Astrocyte of the cerebellum (primary cell): ENCODE measurements at regions of chr17 and their contacts with region 1.

Region 1: DNA sequence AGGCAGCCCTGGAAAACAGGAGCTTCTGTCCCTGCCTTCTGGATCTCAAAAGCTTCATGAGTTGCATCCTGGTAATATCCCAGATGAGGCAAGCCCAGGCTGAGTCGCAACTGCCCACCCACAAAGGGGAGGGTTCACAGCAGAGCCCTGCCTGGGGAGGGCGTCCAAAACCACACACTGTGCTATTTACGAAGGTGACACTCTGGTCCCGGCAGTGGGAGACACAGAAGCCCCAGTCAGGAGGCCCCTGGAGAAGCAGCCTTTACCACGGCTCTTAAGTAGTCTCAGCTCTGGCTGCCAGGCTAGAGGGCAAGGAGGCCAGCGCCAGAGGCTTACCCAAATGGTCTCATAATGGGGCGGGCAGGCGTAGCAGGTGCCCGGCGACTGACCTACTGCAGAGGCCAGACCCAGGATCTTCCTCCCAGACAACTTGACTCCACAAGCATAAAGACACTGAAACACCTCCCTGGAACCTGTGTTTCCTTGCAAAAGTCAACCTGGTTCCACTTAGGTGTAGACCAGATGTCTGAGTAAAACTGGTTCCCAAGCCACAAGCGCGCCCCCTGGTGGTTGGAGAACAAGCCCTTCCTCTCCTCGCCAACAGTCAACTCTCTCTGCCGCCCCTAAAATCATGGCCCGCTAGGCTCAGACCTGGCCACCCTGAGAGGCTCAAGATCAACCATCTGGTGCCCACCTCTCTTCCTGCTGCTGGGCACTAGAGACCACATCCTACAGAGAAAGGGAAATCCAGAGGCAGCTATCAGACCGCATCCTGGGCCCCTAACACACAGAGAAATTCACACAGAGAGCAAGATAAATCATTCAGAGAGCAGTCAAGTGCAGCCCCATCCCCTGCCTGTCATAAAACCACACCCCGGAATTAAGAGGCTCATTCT is 5.2 kb downstream of the AXIN2 start:
- DNase-seq: peak; percentile 73
- H3K4me3 ChIP-seq: no peak overlapping the region
- CTCF ChIP-seq: peak; percentile 89

Region 2: DNA sequence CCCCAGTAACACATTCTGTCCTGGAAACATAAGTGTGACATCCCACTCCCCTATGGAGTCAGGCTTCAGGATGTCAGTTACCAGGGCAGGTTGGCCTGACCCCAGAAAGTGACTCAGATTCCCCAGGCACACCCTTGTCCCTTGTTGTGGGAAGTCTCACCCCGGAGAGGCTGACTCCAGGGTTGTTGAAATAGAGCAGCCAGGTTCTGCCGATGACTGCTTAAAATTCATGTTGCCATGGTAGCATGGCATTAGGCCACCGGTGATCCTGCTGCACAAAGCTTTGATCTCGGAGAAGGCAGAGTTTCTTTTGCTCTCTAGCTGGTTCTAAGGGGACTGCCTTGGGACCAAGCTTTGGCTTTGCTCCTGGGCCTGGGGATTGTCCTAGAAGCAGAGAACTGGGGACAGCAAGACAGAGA is 312.5 kb before region 1 on chr17:
- in situ Hi-C with region 1: loop called (anchors 5 kb)
- DNase-seq: peak; percentile 59
- H3K4me3 ChIP-seq: peak overlapping the region; percentile 5
- CTCF ChIP-seq: no peak

Region 3: GRCh38 chr17:65988081-65988850 is 432.0 kb after region 1 on chr17:
- in situ Hi-C with region 1: loop called (anchors 10 kb)
- DNase-seq: peak; percentile 19
- H3K4me3 ChIP-seq: no peak overlapping the region
- CTCF ChIP-seq: peak; percentile 60